ENCODE measurements at regions of chr14 and their contacts with region 1.

Region 1: DNA sequence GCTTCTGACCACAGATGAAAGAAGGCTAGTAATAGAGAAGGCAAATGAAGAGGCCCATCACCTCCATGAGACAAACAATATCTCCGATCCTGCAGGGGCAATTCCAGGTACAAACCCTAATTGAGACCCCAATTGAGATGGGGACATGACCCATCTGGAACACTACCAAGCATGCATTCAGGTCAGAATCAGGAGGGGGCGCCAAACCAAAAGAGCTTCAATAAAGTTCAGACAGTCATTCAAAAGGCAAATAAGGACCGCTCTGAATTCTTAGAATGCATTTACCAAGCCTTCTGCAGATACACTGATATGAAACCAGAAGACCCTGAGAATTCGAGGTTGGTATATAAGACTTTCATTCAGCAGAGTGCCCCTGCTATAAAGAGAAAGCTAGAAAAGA is 10.2 kb upstream of the EDDM3B start:
- DNase-seq: peak in 1 of 2 experiments; percentile 63
- H3K4me3 ChIP-seq: no peak overlapping the region
- H3K27ac ChIP-seq: no peak overlapping the region
- H3K4me1 ChIP-seq: peaks cover 0 to 9% (median 2%) of the 10 kb centered on the region in 4 experiments; a peak in 6 of 7 replicates
- H3K27me3 ChIP-seq: no peaks in the 10 kb centered on the region
- CTCF ChIP-seq: peak in 2 of 3 experiments; percentile 59 to 61; a peak in 3 of 4 replicates
- EP300 ChIP-seq: no peak
- POLR2A ChIP-seq: no peak
- RAD21 ChIP-seq: peak; percentile 40 to 61

Region 2: DNA sequence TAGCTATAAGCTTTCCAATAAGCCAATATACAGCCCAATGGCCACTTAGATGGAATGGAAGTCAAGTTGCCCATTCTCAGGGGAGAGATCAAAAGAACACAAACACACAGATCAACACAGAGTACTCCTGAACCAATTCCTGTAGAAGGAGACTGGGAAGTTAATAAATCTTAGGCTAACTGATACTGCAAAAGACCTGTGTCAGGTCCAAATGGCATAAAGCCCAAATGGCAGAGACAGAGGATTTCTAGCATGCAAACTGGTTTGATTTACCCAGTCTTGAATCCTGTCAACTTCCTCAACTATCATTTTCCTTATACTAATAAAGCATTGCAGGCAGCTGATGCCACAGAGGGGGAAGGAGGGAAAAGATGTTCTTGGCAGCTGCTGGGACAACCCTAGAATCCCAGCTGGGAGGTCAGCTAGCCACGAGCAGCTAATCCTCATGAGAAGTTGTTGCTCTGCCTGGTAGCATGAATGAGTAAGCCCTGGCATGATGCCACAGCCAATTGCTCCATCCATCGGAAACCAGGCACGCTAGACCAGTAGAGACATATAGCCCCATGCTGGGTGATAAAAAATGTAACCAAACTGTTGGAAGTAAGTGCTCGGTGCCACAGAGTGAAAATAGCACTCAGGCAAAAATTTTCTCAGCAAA is 43.2 kb before region 1 on chr14:
- CTCF ChIA-PET with region 1: interaction called, 12 read pairs
- POLR2A ChIA-PET with region 1: no interaction called
- DNase-seq: no peak
- H3K4me3 ChIP-seq: no peak overlapping the region
- H3K27ac ChIP-seq: no peak overlapping the region
- H3K4me1 ChIP-seq: no peaks in the 10 kb centered on the region
- H3K27me3 ChIP-seq: peaks cover 0 to 1% (median 0%) of the 10 kb centered on the region in 4 experiments; a peak in 1 of 7 replicates
- CTCF ChIP-seq: no peak
- EP300 ChIP-seq: no peak
- POLR2A ChIP-seq: no peak
- RAD21 ChIP-seq: no peak

Region 3: GRCh38 chr14:20743256-20743959 is 14.6 kb before region 1 on chr14:
- CTCF ChIA-PET with region 1: interaction called, 70 read pairs
- POLR2A ChIA-PET with region 1: interaction called, 3 read pairs
- DNase-seq: no peak
- H3K4me3 ChIP-seq: no peak overlapping the region
- H3K27ac ChIP-seq: no peak overlapping the region
- H3K4me1 ChIP-seq: no peaks in the 10 kb centered on the region
- H3K27me3 ChIP-seq: no peaks in the 10 kb centered on the region
- CTCF ChIP-seq: no peak
- EP300 ChIP-seq: no peak
- POLR2A ChIP-seq: no peak
- RAD21 ChIP-seq: no peak

Region 4: GRCh38 chr14:20769421-20769820 is 11.5 kb after region 1 on chr14:
- CTCF ChIA-PET with region 1: interaction called, 43 read pairs
- POLR2A ChIA-PET with region 1: no interaction called
- DNase-seq: no peak
- H3K4me3 ChIP-seq: no peak overlapping the region
- H3K27ac ChIP-seq: no peak overlapping the region
- H3K4me1 ChIP-seq: peaks cover 0 to 12% (median under 1%) of the 10 kb centered on the region in 4 experiments; a peak in 3 of 7 replicates
- H3K27me3 ChIP-seq: peaks cover 0 to 3% (median 0%) of the 10 kb centered on the region in 4 experiments; a peak in 1 of 7 replicates
- CTCF ChIP-seq: no peak
- EP300 ChIP-seq: no peak
- POLR2A ChIP-seq: no peak
- RAD21 ChIP-seq: no peak

Region 5: DNA sequence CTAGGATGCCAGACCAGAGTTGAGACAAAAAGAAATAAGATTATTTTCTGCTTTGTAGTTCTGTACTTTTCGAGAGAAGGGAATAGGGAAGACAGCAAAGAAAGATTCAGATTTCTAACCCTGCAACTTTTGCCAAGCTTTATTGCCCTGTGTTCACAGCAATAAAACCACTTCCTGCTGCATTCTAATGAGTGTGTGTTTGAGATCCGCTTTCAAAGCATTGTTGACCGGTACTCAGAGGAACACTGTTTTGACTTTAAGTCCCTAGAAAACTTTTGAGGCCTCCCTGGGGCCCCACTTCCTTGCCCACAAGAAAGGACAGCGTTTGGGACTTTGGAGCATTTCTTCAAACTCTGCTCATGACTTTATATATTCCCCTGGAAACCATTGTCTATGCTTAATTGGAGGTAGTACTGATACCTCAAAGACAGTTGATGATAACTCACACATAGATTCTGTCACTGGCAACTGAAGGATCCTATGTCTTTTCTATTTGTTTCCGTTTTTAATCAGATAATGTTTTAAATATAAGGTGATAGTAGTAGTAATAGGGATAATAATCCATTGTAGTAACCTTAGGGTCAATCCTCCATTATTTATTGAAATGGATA is 24.4 kb after region 1 on chr14:
- CTCF ChIA-PET with region 1: interaction called, 10 read pairs
- POLR2A ChIA-PET with region 1: no interaction called
- DNase-seq: no peak
- H3K4me3 ChIP-seq: no peak overlapping the region
- H3K27ac ChIP-seq: no peak overlapping the region
- H3K4me1 ChIP-seq: peaks cover 4 to 11% (median 5%) of the 10 kb centered on the region in 4 experiments; a peak in 6 of 7 replicates
- H3K27me3 ChIP-seq: no peaks in the 10 kb centered on the region
- CTCF ChIP-seq: no peak
- EP300 ChIP-seq: no peak
- POLR2A ChIP-seq: no peak
- RAD21 ChIP-seq: no peak

Region 6: DNA sequence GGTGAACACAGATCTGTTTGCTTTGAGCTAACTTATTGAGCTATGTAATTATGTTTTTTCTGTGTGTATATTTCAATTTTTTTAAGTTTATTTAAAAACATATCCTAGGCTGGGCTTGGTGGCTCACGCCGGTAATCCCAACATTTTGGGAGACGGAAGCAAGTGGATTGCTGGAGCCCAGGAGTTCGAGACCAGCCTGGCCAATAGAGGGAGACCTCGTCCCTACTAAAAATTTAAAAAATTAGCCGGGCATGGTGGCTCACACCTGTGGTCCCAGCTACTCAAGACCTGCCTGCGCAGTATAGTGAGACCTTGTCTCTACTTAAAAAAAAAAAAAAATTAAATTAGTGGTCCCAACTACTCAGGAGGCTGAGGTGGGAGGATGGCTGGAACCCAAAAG is 60.9 kb after region 1 on chr14:
- CTCF ChIA-PET with region 1: interaction called, 12 read pairs
- POLR2A ChIA-PET with region 1: interaction called, 3 read pairs
- DNase-seq: no peak
- H3K4me3 ChIP-seq: no peak overlapping the region
- H3K27ac ChIP-seq: no peak overlapping the region
- H3K4me1 ChIP-seq: peaks cover 0 to 19% (median 7%) of the 10 kb centered on the region in 4 experiments; a peak in 3 of 7 replicates
- H3K27me3 ChIP-seq: no peaks in the 10 kb centered on the region
- CTCF ChIP-seq: peak; percentile 22 to 48 (median 31)
- EP300 ChIP-seq: no peak
- POLR2A ChIP-seq: no peak
- RAD21 ChIP-seq: peak; percentile 32 to 55; a peak in 3 of 4 replicates

Region 7: GRCh38 chr14:20866963-20867362 is 109.0 kb after region 1 on chr14:
- CTCF ChIA-PET with region 1: interaction called, 10 read pairs
- POLR2A ChIA-PET with region 1: no interaction called
- DNase-seq: no peak
- H3K4me3 ChIP-seq: no peak overlapping the region
- H3K27ac ChIP-seq: no peak overlapping the region
- H3K4me1 ChIP-seq: no peaks in the 10 kb centered on the region
- H3K27me3 ChIP-seq: no peaks in the 10 kb centered on the region
- CTCF ChIP-seq: peak; percentile 33 to 71 (median 70)
- EP300 ChIP-seq: no peak
- POLR2A ChIP-seq: no peak
- RAD21 ChIP-seq: peak; percentile 69 to 75